Gastrocnemius medialis (tissue), 4 donors: ENCODE measurements at regions of chr17 and their contacts with region 1.

Region 1: DNA sequence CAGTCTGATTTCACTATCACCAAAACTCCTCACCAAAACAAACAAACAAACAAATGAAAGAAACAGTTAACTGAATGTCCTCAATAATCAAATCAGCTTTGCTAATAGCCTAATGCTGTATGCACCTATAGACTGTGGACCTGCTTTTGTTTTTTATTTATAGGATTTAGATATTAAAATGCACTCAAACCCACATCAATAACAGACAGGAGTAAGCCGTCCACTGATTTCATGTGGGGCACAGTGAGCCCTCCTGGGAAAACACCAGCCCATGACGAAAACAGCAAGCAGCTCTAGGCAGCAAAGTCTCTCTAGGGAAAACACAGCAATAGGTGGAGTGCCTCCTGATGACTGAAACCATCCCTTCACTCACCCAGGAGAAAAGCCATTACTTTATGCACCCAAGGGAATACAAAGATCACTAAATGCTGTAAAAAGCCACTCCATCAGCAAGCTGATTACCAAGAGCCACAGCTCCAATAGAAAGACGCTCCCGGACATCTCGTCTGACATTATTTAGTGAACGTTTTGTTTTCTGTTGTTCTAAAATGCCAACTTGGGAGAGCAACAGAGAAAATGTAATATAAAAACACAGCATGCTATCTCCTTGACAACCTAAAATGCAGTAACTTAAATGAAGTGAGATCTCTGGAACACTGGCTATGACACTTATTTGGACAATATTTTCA is 47.8 kb downstream of the ANKFY1 start:
- DNase-seq: no peak
- ATAC-seq: no peak
- H3K4me3 ChIP-seq: no peak overlapping the region
- H3K27ac ChIP-seq: peak overlapping the region; percentile 74 to 85 (median 80)
- H3K4me1 ChIP-seq: peaks cover 34 to 45% of the 10 kb centered on the region in 2 donors
- H3K27me3 ChIP-seq: no peaks in the 10 kb centered on the region
- CTCF ChIP-seq: no peak
- POLR2A ChIP-seq: no peak

Region 2: DNA sequence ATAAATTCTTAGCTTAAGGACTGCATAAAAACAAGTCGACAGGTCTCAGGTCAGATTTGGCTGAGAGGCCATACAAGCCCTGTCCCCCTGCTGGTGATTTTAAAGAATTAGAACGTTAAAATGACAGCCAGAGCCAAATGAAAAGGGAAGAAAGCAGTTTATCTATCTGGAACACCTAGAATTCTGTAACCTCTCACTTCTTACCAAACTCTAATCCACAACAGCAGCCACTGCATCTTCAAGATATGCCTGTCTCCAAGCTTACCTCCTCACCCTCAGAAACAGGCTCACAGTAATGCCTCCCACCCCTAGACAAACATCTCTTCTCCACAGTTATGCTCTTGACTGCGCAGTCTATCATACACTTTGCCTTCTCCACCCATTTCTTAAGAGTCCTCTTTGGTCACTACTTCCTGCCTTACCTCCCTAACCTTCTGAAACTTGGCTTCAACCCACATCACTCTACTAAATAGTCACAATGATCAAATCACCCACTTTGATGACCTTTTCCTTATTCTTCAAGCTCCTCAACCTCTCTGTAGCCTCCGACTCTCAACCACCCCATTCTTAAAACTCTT is 33.5 kb after region 1 on chr17:
- in situ Hi-C with region 1: no loop called
- intact Hi-C with region 1: loop called (anchors 1 kb)
- DNase-seq: no peak
- ATAC-seq: peak in 1 of 2 donors; percentile 47
- H3K4me3 ChIP-seq: no peak overlapping the region
- H3K27ac ChIP-seq: peak overlapping the region; percentile 31 to 48 (median 36)
- H3K4me1 ChIP-seq: peaks cover 49 to 61% of the 10 kb centered on the region in 2 donors
- H3K27me3 ChIP-seq: no peaks in the 10 kb centered on the region
- CTCF ChIP-seq: peak in 4 of 5 experiments; percentile 29 to 55 (median 46)
- POLR2A ChIP-seq: no peak

Region 3: DNA sequence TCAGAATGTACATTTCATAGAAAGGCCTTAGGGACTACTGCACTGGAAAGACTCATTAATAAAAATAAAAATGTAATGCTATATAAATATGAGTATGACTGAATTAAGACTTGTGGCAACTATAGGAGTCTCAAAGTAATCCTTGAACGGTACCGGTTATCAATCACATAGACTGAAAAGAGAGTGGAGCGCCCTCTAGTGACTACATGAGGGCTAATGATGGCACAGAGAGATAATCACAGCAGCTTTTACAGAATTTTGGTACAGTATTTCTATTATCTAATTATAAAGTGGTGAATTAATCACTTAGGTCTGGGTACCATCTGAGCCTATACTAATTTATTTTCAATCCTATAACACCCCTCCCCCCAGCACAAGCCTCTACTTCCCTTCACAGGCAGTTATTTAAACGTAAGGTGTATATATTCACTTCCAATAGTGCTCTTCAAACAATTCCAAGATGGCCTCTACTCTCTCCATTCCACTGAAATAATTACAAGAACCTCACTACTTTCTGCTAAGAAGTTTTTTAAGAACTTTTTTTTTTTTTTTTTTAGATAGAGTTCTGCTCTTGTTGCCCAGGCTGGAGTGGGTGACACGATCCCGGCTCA is 88.5 kb after region 1 on chr17:
- in situ Hi-C with region 1: loop called in 1 of 4 experiments (anchors 10 kb)
- intact Hi-C with region 1: loop called (anchors 1 kb)
- DNase-seq: no peak
- ATAC-seq: peak; percentile 56 to 62
- H3K4me3 ChIP-seq: no peak overlapping the region
- H3K27ac ChIP-seq: peak overlapping the region; percentile 26 to 44 (median 38)
- H3K4me1 ChIP-seq: peaks cover 34 to 38% of the 10 kb centered on the region in 2 donors
- H3K27me3 ChIP-seq: no peaks in the 10 kb centered on the region
- CTCF ChIP-seq: peak; percentile 46 to 77 (median 57)
- POLR2A ChIP-seq: no peak

Region 4: GRCh38 chr17:4412933-4413831 is 197.2 kb after region 1 on chr17:
- in situ Hi-C with region 1: no loop called
- intact Hi-C with region 1: loop called (anchors 1 kb)
- DNase-seq: peak; percentile 73 to 83
- ATAC-seq: peak; percentile 88 to 93
- H3K4me3 ChIP-seq: no peak overlapping the region
- H3K27ac ChIP-seq: peak overlapping the region in 2 of 4 donors; percentile 8 to 12
- H3K4me1 ChIP-seq: no peaks in the 10 kb centered on the region
- H3K27me3 ChIP-seq: no peaks in the 10 kb centered on the region
- CTCF ChIP-seq: peak; percentile 84 to 96 (median 94)
- POLR2A ChIP-seq: no peak